ENCODE measurements at regions of chr17 and their contacts with region 1.

Region 1: DNA sequence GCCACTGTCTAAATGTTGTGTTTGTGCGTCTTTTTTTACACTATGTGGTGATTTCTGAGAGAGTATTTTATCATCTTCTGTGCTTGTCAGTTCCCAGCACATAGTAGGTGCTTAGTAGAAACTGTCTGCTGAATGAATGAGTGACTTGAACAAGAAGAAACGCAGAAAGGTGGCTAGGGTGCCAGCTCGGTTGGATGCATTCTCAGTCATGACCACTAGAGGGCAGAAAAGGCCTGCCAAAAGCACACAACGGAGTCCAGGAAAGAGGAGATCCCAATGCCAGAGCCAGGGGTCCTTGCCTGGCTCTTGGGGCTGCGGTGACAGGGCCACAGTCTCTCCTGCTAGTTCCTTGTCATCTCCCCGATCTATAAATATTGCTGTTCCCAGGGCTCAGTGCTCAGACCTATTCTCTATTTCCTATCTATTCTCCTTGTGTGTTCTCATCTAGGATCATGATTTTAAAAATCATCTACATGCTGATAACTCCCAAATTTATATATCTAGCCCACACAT is 57.3 kb upstream of the CCL1 start:
- DNase-seq: peak in 1 of 2 donors; percentile 62
- ATAC-seq: peak; percentile 68
- H3K4me3 ChIP-seq: no peak overlapping the region
- H3K27ac ChIP-seq: no peak overlapping the region
- H3K4me1 ChIP-seq: no peaks in the 10 kb centered on the region
- H3K27me3 ChIP-seq: no peaks in the 10 kb centered on the region

Region 2: GRCh38 chr17:34503528-34504145 is 83.3 kb after region 1 on chr17:
- intact Hi-C with region 1: no loop called
- DNase-seq: peak in 1 of 2 donors; percentile 73
- ATAC-seq: no peak
- H3K4me3 ChIP-seq: no peak overlapping the region
- H3K27ac ChIP-seq: no peak overlapping the region
- H3K4me1 ChIP-seq: no peaks in the 10 kb centered on the region
- H3K27me3 ChIP-seq: no peaks in the 10 kb centered on the region

Region 3: DNA sequence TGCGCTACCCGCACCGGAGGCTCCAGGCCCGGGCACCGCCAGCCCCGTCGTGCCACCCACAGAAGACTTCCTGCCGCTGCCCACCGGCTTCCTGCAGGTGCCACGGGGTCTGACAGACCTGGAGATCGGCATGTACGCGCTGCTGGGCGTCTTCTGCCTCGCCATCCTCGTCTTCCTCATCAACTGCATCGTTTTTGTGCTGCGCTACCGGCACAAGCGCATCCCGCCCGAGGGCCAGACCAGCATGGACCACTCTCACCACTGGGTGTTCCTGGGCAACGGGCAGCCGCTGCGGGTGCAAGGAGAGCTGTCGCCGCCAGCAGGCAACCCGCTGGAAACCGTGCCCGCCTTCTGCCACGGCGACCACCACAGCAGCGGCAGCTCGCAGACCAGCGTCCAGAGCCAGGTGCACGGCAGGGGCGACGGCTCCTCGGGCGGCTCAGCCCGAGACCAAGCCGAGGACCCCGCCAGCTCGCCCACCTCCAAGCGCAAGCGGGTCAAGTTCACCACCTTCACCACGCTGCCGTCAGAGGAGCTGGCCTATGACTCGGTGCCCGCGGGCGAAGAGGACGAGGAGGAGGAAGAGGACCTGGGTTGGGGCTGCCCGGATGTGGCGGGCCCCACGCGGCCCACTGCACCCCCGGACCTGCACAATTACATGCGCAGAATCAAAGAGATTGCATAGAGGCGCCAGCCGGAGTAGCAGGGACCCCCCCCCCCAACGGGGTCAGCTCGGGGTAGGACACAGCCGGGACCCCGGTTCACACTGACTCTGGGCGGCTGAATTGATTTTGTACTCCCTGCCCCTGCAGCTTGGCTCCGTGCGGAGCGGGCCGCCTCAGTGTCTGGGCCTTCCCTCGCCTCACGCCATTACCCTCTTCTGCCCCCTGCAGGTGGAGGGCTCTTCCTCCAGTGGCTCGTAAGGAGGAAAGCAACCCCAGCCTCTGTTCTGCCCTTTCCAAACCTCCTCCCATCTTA is 217.5 kb after region 1 on chr17:
- intact Hi-C with region 1: loop called (anchors 2 to 10 kb)
- DNase-seq: peak; percentile 83 to 89
- ATAC-seq: peak; percentile 76
- H3K4me3 ChIP-seq: no peak overlapping the region
- H3K27ac ChIP-seq: no peak overlapping the region
- H3K4me1 ChIP-seq: no peaks in the 10 kb centered on the region
- H3K27me3 ChIP-seq: no peaks in the 10 kb centered on the region

Region 4: DNA sequence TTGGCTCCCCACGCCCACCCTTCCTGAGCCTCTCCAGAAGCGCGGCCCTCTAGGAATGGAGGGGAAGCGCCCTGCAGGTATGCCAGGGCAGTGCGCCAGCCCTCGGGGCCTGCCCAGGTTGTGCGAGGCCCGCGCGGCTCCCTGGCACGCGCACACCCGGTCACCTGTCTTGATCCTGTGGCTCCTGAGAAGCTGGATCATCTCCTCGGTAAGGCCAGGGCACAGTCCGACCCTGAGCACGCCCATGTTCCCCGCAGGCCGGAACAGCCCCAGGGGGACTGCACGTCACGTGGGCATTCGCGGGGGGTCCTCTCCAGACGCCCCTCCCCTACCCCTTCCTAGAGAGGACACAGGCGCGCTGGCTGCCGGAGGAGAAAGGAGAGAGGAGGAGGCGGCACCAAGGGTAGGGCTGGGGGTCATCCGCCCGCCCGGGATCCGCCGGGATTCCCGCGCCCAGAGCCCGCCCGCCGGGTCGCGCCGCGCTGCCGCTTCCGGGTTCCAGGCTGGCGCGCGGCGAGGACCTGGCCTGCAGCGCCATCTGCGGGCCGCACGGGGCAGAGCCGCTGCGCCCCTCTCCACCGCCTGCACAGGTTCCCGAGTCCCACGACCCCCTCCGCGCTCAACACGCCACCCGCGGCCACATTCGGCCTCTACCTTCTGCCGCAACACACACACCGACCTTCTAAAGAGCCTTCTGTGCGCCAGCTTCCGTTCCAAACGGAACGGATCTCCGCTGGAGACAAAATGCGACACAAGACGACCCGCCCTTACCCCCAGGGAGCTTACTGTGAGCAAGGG is 699.3 kb after region 1 on chr17 and contains the start of gene RAD51D:
- intact Hi-C with region 1: loop called (anchors 2 kb)
- DNase-seq: peak; percentile 80 to 92
- ATAC-seq: peak; percentile 95
- H3K4me3 ChIP-seq: peak within 1 kb of the TSS; percentile 64 to 75
- H3K27ac ChIP-seq: no peak within 1 kb of the TSS
- H3K4me1 ChIP-seq: no peaks in the 10 kb centered on the region
- H3K27me3 ChIP-seq: no peaks in the 10 kb centered on the region
- total RNA-seq, gene RAD51D: 14.8 to 17.3 TPM

Region 5: DNA sequence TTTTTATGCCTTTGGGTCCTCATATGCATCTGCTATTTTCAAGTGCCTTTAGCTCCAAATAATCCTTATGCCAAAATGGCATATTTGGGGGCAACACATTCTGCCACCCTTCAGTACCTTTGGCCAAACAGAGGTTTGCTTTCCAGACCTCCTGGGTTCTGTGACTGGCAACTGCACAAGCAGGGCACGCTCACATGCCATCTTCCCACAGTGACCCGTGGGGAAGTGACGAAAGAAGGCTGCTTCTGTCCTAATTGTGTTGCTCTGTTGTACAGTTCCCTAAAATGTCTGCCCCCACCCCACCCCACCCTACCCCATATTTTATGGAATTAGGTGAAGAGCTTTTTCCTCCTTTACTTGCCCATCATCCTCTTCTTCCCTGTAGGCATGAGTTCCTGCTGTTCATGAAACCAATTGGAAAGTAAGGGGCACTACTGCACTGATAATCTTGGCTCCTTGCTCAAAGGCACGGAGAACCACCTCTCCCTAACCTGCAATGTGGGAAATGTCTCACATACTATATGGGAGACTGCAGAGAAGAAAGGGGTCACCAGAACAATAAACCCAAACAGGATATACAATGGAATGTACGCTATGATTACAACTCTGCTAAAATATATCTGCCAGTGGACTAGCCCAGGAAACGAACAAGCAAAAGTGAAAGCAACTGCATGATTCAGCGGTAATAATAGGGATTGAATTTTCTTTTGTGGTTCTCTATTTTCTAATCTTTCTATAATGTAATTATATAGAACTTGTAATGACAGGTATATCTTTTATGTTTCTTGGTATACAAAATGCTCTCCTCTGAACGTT is 1120.5 kb after region 1 on chr17:
- intact Hi-C with region 1: loop called in 1 of 2 experiments (anchors 5 kb)
- DNase-seq: peak in 1 of 2 donors; percentile 82
- ATAC-seq: no peak
- H3K4me3 ChIP-seq: no peak overlapping the region
- H3K27ac ChIP-seq: no peak overlapping the region
- H3K4me1 ChIP-seq: peaks cover 0 to 3% of the 10 kb centered on the region in 2 donors
- H3K27me3 ChIP-seq: no peaks in the 10 kb centered on the region

Measured in aorta (tissue), 5 donors.